ENCODE measurements at regions of chr3 and their contacts with region 1.

Region 1: GRCh38 chr3:156509189-156510174 is 45.4 kb downstream of the SSR3 start:
- DNase-seq: peak; percentile 37
- ATAC-seq: peak; percentile 91
- H3K4me3 ChIP-seq: no peak overlapping the region
- H3K27ac ChIP-seq: no peak overlapping the region
- H3K4me1 ChIP-seq: peaks cover 4 to 6% of the 10 kb centered on the region in 2 experiments; a peak in 2 of 4 replicates
- H3K27me3 ChIP-seq: no peaks in the 10 kb centered on the region
- CTCF ChIP-seq: peak; percentile 30 to 81 (median 69); a peak in 5 of 6 replicates
- POLR2A ChIP-seq: no peak
- RAD21 ChIP-seq: peak; percentile 83

Region 2: GRCh38 chr3:155995525-155996351 is 513.7 kb before region 1 on chr3:
- CTCF ChIA-PET with region 1: interaction called, 3 read pairs
- POLR2A ChIA-PET with region 1: no interaction called
- RAD21 ChIA-PET with region 1: no interaction called
- intact Hi-C with region 1: loop called (anchors 10 kb)
- DNase-seq: peak; percentile 54
- ATAC-seq: peak; percentile 97
- H3K4me3 ChIP-seq: no peak overlapping the region
- H3K27ac ChIP-seq: no peak overlapping the region
- H3K4me1 ChIP-seq: peaks cover 0 to 5% of the 10 kb centered on the region in 2 experiments; a peak in 1 of 4 replicates
- H3K27me3 ChIP-seq: no peaks in the 10 kb centered on the region
- CTCF ChIP-seq: peak; percentile 56 to 70 (median 66)
- POLR2A ChIP-seq: no peak
- RAD21 ChIP-seq: peak; percentile 78

Region 3: GRCh38 chr3:156174229-156174847 is 335.1 kb before region 1 on chr3:
- CTCF ChIA-PET with region 1: interaction called, 19 read pairs
- POLR2A ChIA-PET with region 1: no interaction called
- RAD21 ChIA-PET with region 1: interaction called, 3 to 5 read pairs
- intact Hi-C with region 1: no loop called
- DNase-seq: peak; percentile 16
- ATAC-seq: peak; percentile 59; the same call in 1 of the 2 replicates
- H3K4me3 ChIP-seq: no peak overlapping the region
- H3K27ac ChIP-seq: no peak overlapping the region
- H3K4me1 ChIP-seq: no peaks in the 10 kb centered on the region; a peak in 1 of 4 replicates
- H3K27me3 ChIP-seq: no peaks in the 10 kb centered on the region
- CTCF ChIP-seq: peak; percentile 15 to 53 (median 29); a peak in 4 of 6 replicates
- POLR2A ChIP-seq: no peak
- RAD21 ChIP-seq: peak; percentile 72

Region 4: DNA sequence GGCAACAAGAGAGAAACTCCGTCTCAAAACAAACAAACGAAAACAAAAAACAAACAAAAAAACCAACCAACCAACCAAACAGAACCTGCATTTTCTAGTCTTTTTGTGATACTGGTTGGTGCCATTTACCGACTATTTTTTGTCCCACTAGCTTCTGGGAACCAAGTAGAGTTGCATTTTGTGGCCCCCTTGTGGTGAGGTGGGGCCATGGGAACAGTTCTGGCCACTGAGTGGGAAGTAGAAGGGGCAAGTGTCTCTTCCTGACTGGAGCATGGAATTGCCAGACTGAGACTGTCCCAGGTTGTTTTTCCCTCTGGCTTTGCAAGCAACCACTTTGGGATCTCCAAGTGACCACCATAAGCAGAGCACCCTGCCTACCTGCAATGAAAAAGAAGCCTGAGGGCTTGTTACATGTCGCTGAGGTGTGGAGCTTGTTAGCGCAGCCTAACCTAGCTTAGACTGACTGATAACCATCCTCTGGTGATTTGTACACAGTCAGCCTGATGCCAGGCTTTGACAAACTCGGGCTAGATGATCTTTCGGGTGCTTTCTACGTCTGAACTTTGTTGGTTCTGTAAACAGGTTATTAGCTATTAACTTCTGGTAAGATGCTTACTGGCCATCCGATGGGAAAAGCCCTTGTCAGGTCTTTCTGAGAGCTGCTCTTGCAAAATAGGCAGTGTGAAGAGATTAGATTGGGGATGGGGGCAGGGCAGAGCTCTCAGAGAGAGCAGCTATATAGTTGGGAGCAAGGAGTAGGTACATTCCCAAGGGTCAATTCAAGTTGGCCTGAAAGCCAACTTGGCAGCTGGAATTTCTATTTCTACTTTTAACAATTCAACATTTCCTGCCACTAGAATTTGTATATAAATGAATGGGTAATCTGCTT is 126.8 kb before region 1 on chr3:
- CTCF ChIA-PET with region 1: interaction called, 13 read pairs
- POLR2A ChIA-PET with region 1: no interaction called
- RAD21 ChIA-PET with region 1: no interaction called
- intact Hi-C with region 1: no loop called
- DNase-seq: peak; percentile 23
- ATAC-seq: peak; percentile 94
- H3K4me3 ChIP-seq: no peak overlapping the region
- H3K27ac ChIP-seq: no peak overlapping the region
- H3K4me1 ChIP-seq: no peaks in the 10 kb centered on the region
- H3K27me3 ChIP-seq: 0 out of 2 replicates have a peak, but pooled peaks cover 2% of the 10 kb centered on the region
- CTCF ChIP-seq: peak; percentile 62 to 87 (median 81); a peak in 5 of 6 replicates
- POLR2A ChIP-seq: no peak
- RAD21 ChIP-seq: peak; percentile 81

Region 5: GRCh38 chr3:156449712-156450574 is 59.5 kb before region 1 on chr3:
- CTCF ChIA-PET with region 1: interaction called, 17 read pairs
- POLR2A ChIA-PET with region 1: no interaction called
- RAD21 ChIA-PET with region 1: no interaction called
- intact Hi-C with region 1: no loop called
- DNase-seq: peak; percentile 37
- ATAC-seq: peak; percentile 91
- H3K4me3 ChIP-seq: no peak overlapping the region
- H3K27ac ChIP-seq: no peak overlapping the region
- H3K4me1 ChIP-seq: no peaks in the 10 kb centered on the region
- H3K27me3 ChIP-seq: no peaks in the 10 kb centered on the region
- CTCF ChIP-seq: peak; percentile 47 to 74 (median 68); a peak in 5 of 6 replicates
- POLR2A ChIP-seq: no peak
- RAD21 ChIP-seq: peak; percentile 61

Region 6: DNA sequence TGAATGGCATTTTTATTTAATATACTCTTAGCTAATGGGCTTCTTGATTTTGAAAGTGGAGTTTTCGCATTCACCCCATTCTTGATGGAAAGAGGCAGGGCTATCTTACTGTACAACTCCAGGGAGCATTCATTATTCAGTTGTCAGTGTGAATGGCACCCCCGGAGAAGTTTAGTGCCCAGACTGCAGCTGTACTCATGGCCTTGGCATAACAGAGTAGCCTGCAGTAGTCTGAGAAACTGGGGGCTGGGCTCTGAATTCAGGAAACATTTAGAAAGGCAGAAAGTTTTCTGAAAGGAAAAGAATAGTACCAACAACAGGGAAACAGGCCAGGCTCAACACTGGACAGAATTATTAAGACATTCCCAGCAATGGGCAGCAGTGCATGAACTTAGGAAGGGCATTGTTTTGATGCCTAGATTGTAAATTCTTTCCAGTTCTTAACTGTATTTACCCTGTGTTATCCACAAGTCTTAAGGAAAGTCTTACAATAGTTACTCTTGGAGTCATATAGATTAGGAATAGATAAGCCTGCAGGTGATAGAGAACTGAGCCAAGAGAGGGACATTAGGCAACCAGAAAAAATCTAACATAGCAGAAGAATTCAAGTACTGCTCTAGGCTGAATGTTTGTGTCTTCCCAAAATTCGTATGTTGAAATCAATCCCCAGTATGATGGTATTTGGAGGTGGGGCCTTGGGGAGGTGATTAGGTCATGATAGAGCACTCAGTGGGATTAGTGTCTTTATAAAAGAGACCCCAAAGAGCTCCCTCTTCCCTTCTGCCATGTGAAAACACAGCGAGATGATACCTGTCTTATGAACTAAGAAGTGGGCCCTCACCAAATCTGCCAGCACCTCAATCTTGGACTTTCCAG is 209.4 kb after region 1 on chr3:
- CTCF ChIA-PET with region 1: no interaction called
- POLR2A ChIA-PET with region 1: no interaction called
- RAD21 ChIA-PET with region 1: no interaction called
- intact Hi-C with region 1: no loop called
- DNase-seq: no peak
- ATAC-seq: no peak
- H3K4me3 ChIP-seq: no peak overlapping the region
- H3K27ac ChIP-seq: no peak overlapping the region
- H3K4me1 ChIP-seq: no peaks in the 10 kb centered on the region
- H3K27me3 ChIP-seq: no peaks in the 10 kb centered on the region
- CTCF ChIP-seq: no peak
- POLR2A ChIP-seq: no peak
- RAD21 ChIP-seq: no peak